Cardiac septum (tissue), 1 donor: ENCODE measurements at regions of chr7 and their contacts with region 1.

Region 1: GRCh38 chr7:44240983-44241510 is 40.3 kb downstream of the YKT6 start:
- DNase-seq: peak; percentile 87

Region 2: GRCh38 chr7:44307301-44307900 is 66.4 kb after region 1 on chr7:
- intact Hi-C with region 1: loop called (anchors 2 kb)
- DNase-seq: peak; percentile 82

Region 3: GRCh38 chr7:44368885-44369284 is 127.8 kb after region 1 on chr7:
- intact Hi-C with region 1: loop called (anchors 10 kb)
- DNase-seq: no peak

Region 4: GRCh38 chr7:44383566-44383965 is 142.5 kb after region 1 on chr7:
- intact Hi-C with region 1: no loop called
- DNase-seq: peak; percentile 66

Region 5: GRCh38 chr7:44477063-44477830 is 236.2 kb after region 1 on chr7:
- intact Hi-C with region 1: loop called (anchors 2 kb)
- DNase-seq: peak; percentile 79

Region 6: DNA sequence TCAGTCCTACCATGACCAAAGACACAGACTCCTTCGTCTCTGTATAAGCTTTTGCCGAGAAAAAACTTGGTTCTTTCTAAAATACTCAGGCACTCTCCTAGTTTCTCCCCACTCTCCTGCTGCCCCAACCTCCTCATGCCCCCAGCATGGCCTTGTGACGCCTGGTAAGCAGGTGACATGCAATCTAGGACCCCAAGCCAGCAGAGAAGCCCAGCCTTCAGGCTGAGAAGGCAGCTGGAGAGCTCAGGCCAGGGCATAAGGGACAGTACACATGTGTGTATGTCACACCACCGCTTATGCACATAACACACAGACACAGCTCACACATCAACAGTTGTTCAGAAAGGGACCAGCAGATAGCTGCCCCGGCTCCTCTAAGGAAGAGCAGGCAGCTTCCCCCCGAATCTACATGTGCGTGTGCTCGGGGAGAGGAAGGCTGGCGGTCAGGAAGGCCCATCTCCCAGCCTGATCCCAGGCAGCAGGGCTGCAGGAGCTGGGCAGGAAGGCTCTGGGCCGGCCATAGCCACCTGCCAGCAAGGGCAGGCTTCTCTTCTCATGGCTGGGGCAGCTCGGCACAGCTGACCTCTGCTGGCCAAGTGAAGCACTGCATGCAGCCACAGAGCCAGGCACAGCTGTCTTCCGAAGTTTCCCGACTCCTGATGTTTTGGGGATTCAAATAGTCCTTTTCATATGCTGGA is 324.2 kb after region 1 on chr7:
- intact Hi-C with region 1: loop called (anchors 5 kb)
- DNase-seq: peak; percentile 88